ENCODE measurements at regions of chr1 and their contacts with region 1.

Region 1: DNA sequence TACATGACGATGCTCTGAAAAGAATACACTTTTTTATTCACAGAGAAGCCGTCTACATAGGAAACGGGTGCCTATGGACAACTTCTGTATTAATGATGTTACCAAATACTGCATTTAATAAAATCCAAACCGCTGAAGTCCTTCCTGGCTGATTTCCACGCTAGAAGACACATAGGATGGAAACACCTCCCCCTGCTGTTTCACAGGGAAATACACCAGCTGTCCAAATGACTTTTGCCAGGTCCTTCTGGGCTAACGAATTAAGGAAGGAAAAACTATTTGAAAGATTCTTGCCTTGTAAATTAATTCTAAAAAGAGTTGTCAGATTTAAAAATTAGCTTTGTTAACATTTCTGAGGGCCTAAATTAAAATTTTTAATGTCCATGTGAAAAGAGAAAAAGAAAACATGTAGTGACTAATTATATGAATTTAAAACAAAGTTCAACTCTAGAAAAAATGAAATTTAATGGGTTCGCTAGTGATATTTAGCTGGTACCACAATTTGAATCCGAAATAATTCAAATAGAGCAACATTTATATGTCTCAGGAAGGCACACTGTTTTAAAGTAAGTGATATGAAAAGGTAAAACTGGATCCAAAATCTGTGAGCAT is 146.0 kb downstream of the RERE start:
- DNase-seq: no peak
- H3K4me3 ChIP-seq: no peak overlapping the region
- H3K27ac ChIP-seq: no peak overlapping the region
- H3K4me1 ChIP-seq: peaks cover 16% of the 10 kb centered on the region
- H3K27me3 ChIP-seq: no peaks in the 10 kb centered on the region
- CTCF ChIP-seq: peak; percentile 60

Region 2: DNA sequence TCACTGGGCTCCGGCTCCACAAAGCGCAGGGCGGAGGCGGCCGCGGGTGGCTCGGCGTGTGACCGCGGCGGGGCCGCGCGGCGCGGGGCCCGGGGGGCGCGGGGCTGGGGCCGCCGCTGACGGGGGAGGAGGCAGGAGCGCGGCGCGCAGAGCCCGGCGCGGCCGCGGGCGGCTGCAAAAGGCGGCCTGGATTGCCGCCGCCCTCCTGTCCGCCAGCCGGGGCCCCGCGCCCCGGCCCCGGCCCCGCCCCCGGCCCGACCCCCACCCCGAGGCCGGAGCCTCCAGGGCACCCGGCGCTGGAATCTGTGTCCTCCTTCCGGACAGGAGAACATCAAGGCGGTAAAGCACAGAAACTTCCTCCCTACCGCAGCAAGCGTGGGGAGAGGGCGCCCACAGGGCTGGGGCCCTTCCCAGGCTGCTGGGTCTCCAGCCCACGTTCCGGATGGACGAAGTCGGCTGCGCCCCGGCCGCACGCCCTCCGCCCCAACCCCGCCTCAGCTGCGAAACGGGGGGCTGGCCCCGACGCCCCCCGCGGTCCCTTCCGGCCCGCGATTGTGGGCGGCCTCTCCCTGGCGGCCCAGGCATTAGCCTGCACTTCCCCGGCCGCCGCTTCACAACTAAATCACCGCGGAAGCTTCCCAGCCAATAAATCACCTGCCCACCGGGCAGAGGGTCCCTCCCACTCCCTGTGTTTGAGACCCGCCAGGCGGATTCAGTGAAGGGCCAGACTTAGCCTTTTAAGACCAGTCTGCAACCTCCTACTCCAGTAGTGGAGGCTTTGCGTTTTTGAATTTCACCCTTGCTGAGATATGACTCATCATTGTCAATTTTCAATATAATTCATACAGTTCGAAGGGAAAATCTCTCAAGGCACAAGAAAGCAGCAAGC is 247.5 kb before region 1 on chr1:
- CTCF ChIA-PET with region 1: interaction called, 10 read pairs
- POLR2A ChIA-PET with region 1: no interaction called
- intact Hi-C with region 1: no loop called
- DNase-seq: peak in 1 of 2 experiments; percentile 51
- H3K4me3 ChIP-seq: peak overlapping the region; percentile 70
- H3K27ac ChIP-seq: peak overlapping the region; percentile 84
- H3K4me1 ChIP-seq: peaks cover 36% of the 10 kb centered on the region
- H3K27me3 ChIP-seq: no peaks in the 10 kb centered on the region
- CTCF ChIP-seq: no peak

Region 3: DNA sequence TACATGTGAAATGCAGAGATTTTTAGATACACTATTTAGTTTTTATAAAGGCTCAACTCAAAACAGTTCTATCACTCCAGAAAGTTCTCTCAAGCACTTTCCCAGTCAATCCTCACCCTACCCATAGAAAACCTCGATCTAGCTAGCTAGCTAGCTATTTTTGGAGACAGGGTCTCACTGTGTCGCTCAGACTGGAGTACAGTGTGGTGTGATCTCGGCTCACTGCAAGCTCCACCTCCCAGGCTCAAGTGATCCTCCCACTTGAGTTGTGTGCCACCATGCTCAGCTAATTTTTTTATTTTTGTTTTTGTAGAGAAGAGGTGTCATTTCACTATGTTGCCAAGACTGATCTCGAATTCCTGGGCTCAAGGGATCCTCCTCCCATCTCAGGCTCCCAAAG is 90.8 kb before region 1 on chr1:
- CTCF ChIA-PET with region 1: no interaction called
- POLR2A ChIA-PET with region 1: no interaction called
- intact Hi-C with region 1: no loop called
- DNase-seq: no peak
- H3K4me3 ChIP-seq: no peak overlapping the region
- H3K27ac ChIP-seq: no peak overlapping the region
- H3K4me1 ChIP-seq: peaks cover 7% of the 10 kb centered on the region; the same call in 1 of the 2 replicates
- H3K27me3 ChIP-seq: no peaks in the 10 kb centered on the region
- CTCF ChIP-seq: no peak

Region 4: DNA sequence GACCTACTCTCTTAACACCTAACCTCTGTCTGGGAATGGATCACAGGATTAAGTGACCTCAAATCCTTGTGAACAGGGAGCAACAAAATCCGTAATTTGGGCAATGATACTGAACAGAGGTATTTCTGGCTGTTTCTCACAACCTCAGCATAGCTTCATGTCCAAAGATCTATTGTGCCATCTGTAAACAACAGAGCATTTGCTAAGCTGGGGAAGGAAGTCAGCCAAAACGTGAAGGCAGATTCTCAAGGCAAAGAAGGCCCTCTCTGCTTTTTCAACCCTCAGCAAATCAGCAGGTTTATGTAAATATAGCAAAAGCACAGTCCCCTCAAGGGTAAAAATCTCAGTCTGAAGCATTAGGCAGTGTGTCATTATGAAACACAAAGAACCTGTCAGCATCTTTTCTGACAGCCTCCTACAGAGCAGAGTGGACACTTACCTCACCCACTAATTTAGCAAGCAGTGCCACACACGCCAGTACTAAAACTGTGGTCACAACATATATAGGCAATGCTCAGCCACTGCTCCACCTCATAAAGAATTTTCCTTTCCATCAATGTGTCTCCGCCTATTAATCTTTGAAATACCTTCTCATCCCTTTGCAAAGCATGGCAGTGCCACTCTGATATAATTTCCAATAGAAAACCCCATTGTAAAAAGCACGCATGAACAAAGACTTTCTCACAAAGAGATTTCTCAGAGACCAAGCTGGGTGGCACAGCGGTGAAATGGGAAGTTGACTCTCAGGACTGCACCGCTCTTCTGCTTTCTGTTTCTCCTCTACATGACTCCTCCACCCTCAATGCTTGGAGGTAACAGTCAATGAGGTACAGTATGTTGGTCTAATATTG is 41.9 kb before region 1 on chr1:
- CTCF ChIA-PET with region 1: no interaction called
- POLR2A ChIA-PET with region 1: no interaction called
- intact Hi-C with region 1: no loop called
- DNase-seq: no peak
- H3K4me3 ChIP-seq: no peak overlapping the region
- H3K27ac ChIP-seq: no peak overlapping the region
- H3K4me1 ChIP-seq: peaks cover 24% of the 10 kb centered on the region
- H3K27me3 ChIP-seq: no peaks in the 10 kb centered on the region
- CTCF ChIP-seq: no peak